SK-N-SH (cell line): ENCODE measurements at regions of chr10 and their contacts with region 1.

Region 1: DNA sequence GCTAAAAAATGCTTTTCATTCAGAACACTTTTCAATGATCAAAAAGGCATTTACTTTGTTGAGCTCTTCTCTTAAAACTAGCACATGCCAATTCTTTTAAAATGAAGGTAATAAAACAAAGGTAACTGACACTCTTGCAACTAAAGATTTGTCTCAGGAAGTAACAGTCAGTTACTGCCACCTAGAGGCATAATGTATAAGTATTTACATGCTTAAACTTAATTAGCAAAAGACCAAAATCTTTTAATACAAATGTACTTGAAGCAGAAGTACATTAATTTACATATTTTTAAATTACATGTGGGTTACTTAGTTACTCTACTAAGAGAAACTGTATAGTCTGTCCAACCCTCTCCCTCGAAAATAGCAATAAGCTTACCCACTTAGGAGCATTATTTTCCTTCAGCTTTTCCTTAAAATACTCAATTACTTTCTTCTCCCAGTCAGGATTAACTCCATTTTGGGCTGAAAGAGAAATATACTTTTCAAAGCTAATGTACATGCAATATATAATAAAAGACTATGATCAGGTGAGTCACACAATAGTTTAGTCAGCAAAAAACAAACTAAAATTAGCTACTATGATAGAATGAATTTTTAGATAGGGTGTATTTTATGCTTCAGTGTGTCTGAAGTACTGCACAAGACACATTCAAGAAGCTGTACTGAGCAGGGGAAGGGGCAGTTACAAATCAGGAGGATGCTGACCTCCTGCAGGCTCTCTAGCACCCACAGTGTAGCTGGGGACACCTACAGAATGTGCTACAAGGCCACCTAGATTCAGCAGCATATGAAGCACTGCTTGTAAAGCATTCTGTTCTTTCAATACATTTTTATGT is 13.0 kb downstream of the MCMBP start:
- DNase-seq: peak; percentile 15
- H3K4me3 ChIP-seq: peak overlapping the region in 1 of 2 experiments; percentile 3; a peak in 1 of 4 replicates
- H3K27ac ChIP-seq: peak overlapping the region in 1 of 2 experiments; percentile 6; a peak in 1 of 4 replicates
- H3K4me1 ChIP-seq: peaks cover 0 to 5% of the 10 kb centered on the region in 2 experiments; a peak in 1 of 4 replicates
- H3K27me3 ChIP-seq: no peaks in the 10 kb centered on the region
- CTCF ChIP-seq: peak; percentile 78
- EP300 ChIP-seq: no peak
- RAD21 ChIP-seq: peak; percentile 72

Region 2: DNA sequence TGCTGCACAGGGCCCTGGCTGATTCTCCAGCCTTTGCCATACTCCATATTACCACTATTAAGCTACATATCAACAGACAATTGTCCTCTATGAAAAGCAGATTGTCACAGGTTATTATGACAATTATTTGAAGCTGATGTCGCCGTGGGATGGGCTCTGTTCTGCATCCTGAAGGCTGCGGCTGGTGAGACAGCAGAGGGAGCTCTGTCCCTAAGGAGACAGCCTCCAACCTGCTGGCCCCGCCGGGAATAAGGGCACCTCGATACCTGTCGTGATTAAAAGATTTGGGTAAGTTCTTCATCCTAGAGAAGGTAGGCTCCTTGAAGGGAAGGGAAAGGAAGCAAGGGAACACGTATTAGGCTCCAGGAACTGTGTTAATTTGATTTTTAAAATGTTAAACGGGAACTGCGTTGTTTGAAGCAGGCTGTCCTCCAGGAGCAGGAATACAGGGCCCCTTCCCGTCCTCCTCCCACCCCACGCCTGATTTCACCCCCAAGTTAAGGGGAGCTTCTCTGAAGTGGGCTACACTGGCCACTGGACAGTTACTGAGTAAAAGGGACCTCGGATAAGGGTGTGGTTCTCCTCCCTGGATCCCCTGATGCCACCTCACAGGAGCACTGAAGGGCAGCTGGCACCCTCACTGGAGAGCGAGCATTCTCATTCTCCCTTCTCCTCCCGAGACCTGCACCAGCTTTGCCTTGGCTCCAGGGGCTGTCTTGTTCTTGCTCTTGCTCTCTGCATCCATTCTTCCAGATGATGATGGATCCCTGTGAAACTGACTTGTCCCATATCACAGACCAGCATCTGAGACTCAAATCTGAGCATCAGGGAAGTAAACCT is 251.1 kb before region 1 on chr10:
- CTCF ChIA-PET with region 1: interaction called, 28 read pairs
- POLR2A ChIA-PET with region 1: no interaction called
- DNase-seq: peak; percentile 67
- H3K4me3 ChIP-seq: no peak overlapping the region; a peak in 1 of 4 replicates
- H3K27ac ChIP-seq: no peak overlapping the region
- H3K4me1 ChIP-seq: peaks cover 0 to 4% of the 10 kb centered on the region in 2 experiments; a peak in 1 of 4 replicates
- H3K27me3 ChIP-seq: no peaks in the 10 kb centered on the region
- CTCF ChIP-seq: peak; percentile 74
- EP300 ChIP-seq: no peak
- RAD21 ChIP-seq: peak; percentile 88

Region 3: GRCh38 chr10:119761106-119761505 is 98.5 kb before region 1 on chr10:
- CTCF ChIA-PET with region 1: interaction called, 156 read pairs
- POLR2A ChIA-PET with region 1: no interaction called
- DNase-seq: no peak
- H3K4me3 ChIP-seq: peak overlapping the region in 1 of 2 experiments; percentile 26; a peak in 1 of 4 replicates
- H3K27ac ChIP-seq: peak overlapping the region; percentile 53 to 73; a peak in 3 of 4 replicates
- H3K4me1 ChIP-seq: peaks cover 0 to 27% of the 10 kb centered on the region in 2 experiments; a peak in 1 of 4 replicates
- H3K27me3 ChIP-seq: no peaks in the 10 kb centered on the region
- CTCF ChIP-seq: no peak
- EP300 ChIP-seq: no peak; a peak in 1 of 4 replicates
- RAD21 ChIP-seq: no peak

Region 4: DNA sequence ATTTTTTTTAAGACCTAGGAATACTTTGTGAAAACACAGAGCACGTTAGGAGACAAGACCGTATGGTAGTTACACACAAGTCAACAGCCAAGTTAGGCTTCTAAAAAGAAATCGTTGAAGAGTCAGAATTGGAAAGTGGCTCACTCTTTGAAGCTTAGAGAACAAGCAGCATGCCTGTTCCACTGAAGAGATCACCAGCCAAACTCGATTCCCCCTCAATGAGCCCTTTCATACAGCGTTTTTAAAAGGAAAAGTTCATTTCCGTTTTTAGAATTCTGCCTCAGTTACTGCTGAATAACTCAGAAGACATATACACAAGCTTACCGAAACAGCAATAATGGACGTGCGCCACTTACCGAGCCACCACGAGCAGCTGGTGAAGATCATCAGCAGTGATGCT is 28.0 kb before region 1 on chr10:
- CTCF ChIA-PET with region 1: interaction called, 15 read pairs
- POLR2A ChIA-PET with region 1: no interaction called
- DNase-seq: no peak
- H3K4me3 ChIP-seq: no peak overlapping the region
- H3K27ac ChIP-seq: no peak overlapping the region
- H3K4me1 ChIP-seq: no peaks in the 10 kb centered on the region
- H3K27me3 ChIP-seq: no peaks in the 10 kb centered on the region
- CTCF ChIP-seq: no peak
- EP300 ChIP-seq: no peak
- RAD21 ChIP-seq: no peak

Region 5: DNA sequence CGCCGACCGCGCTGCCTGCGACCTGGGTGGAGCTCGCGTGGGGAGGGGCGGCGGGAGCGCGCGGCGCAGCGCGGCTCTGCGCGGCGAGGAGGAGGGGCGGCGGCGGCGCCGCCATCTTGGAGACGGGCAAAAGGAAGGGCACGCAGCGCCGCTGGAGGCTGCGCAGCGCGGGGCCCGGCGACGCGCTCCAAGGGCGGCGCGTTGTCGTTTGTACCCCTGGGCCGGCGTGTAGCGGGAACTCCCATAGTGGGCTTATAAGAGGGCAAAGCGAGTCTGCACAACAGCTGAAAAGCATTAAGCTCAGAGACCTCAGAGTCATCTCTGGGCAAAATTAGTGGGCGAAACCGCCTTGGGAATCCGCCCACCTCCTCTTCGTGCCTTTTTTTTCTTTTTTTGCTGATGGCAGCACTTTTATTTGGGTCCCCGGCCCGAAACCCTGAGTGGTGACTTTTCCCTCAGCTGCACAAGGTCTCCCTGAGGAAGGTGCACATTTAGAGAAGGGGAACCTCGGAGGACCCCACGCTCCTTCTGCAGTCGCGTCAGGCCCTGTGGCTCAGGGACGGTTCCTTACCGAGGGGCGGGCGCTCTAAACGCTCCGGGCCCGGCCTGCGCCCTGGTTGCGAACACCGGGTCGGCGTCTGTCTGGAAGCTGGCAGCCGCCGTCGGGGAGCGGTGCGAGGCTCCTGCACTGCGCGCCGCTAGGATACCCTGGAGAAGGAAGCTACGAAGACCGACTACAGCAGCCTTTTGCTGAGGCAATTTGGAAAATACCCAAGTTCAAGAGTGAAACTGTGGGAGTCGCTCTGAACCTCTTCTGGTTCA is 13.4 kb after region 1 on chr10:
- CTCF ChIA-PET with region 1: interaction called, 68 read pairs
- POLR2A ChIA-PET with region 1: interaction called, 5 read pairs
- DNase-seq: peak; percentile 95
- H3K4me3 ChIP-seq: peak overlapping the region; percentile 79 to 88
- H3K27ac ChIP-seq: peak overlapping the region; percentile 43 to 94
- H3K4me1 ChIP-seq: peaks cover 5 to 11% of the 10 kb centered on the region in 2 experiments; a peak in 3 of 4 replicates
- H3K27me3 ChIP-seq: no peaks in the 10 kb centered on the region
- CTCF ChIP-seq: no peak
- EP300 ChIP-seq: no peak
- RAD21 ChIP-seq: no peak

Region 6: DNA sequence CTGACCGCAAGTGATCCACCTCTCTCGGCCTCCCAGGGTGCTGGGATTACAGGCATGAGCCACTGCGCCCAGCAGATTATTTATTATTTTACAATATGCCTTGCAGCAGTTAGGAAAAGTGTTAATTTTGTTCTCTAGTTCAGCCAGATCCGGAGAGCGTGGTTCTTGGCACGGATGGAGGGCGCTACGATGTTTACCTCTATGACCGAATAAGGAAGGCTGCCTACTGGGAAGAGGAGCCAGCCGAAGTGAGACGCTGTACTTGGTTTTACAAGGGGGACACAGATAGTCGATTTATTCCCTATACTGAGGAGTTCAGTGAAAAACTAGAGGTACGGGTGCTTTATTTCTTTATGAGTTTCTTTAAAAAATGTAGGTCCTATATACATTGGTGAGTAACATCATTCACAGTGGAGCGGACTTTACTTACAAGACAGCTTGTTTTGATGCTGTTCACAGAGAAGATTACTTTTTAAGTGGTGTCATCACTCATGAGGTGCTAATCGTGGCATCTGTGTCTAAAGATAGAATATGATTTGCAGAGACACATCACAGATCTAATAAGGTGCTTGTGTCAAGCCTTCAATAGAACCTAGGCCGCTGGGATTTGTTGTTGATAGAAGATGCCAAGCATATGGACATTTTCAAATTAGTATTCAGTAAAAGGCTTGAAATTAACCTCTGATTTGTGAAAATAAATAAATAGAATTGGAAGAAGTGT is 44.5 kb after region 1 on chr10:
- CTCF ChIA-PET with region 1: no interaction called
- POLR2A ChIA-PET with region 1: no interaction called
- DNase-seq: no peak
- H3K4me3 ChIP-seq: no peak overlapping the region
- H3K27ac ChIP-seq: no peak overlapping the region
- H3K4me1 ChIP-seq: no peaks in the 10 kb centered on the region; a peak in 1 of 4 replicates
- H3K27me3 ChIP-seq: no peaks in the 10 kb centered on the region
- CTCF ChIP-seq: no peak
- EP300 ChIP-seq: no peak
- RAD21 ChIP-seq: no peak

Region 7: DNA sequence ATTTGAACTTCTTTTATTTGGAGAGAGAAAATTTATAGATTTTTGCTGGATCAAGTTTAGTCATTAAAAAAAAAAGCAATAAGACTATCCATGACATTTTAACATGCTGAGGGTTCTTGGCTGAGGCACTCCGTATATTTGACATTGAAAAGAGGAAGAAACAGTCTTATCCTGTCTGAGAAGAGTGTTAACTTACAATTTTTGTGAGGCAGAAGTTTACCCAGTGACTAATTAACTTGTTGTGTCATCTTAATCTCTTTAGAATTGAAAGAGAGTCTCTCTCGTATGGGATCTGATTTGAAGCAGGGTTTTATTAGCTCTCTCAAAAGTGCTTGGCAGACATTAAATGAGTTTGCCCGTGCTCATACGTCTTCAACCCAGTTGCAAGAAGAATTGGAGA is 72.2 kb after region 1 on chr10:
- CTCF ChIA-PET with region 1: no interaction called
- POLR2A ChIA-PET with region 1: no interaction called
- DNase-seq: no peak
- H3K4me3 ChIP-seq: no peak overlapping the region
- H3K27ac ChIP-seq: no peak overlapping the region
- H3K4me1 ChIP-seq: no peaks in the 10 kb centered on the region
- H3K27me3 ChIP-seq: no peaks in the 10 kb centered on the region
- CTCF ChIP-seq: no peak
- EP300 ChIP-seq: no peak
- RAD21 ChIP-seq: no peak

Region 8: GRCh38 chr10:120262857-120263547 is 403.4 kb after region 1 on chr10:
- CTCF ChIA-PET with region 1: no interaction called
- POLR2A ChIA-PET with region 1: no interaction called
- DNase-seq: no peak
- H3K4me3 ChIP-seq: no peak overlapping the region
- H3K27ac ChIP-seq: no peak overlapping the region
- H3K4me1 ChIP-seq: no peaks in the 10 kb centered on the region
- H3K27me3 ChIP-seq: no peaks in the 10 kb centered on the region
- CTCF ChIP-seq: no peak
- EP300 ChIP-seq: no peak
- RAD21 ChIP-seq: no peak